ENCODE measurements at regions of chr9 and their contacts with region 1.

Region 1: DNA sequence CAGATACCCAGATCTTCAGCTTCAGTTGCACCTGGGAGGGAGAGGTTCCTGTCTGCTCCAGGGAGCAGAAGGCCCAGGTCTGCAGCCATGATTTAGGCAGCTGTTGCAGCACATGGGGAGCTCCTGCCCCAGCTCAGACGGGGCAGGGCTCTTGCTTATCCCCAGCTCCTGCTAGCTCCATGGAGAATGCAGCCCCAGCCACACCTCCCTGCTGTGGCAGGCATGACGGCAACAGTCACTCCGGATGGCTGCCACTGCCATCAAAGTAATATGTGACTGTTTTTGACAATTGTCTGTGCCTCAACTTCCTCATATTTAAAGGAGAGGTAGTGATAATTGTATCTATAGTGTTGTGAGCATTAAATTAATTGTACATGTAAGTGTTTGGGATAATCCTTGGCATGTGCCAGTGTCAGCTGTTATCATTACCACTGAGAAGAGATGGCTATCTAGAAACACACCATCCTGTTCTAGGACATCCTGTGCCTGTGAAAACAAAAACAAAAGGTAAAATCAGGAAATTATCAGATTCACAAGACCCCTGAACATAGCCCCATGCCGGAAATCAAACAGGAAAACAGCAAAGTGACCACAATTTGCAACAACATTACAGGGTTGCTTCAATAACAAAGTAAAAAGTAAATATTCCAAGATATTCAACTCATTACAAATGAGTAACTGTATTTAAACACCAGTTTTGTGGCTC is 1048.8 kb upstream of the ACO1 start:
- DNase-seq: peak in 1 of 9 donors; percentile 17
- ATAC-seq: no peak
- H3K4me3 ChIP-seq: peak overlapping the region; percentile 12
- H3K4me3 Mint-ChIP-seq: peak overlapping the region; percentile 3 to 71 (median 55)
- H3K27ac ChIP-seq: no peak overlapping the region
- H3K27ac Mint-ChIP-seq: peak overlapping the region in 6 of 9 donors; percentile 34 to 92 (median 59)
- H3K4me1 ChIP-seq: peaks cover 23 to 26% of the 10 kb centered on the region in 2 donors
- H3K4me1 Mint-ChIP-seq: peaks cover 6 to 28% (median 20%) of the 10 kb centered on the region in 7 donors
- H3K27me3 ChIP-seq: no peaks in the 10 kb centered on the region
- H3K27me3 Mint-ChIP-seq: peaks cover 0 to 3% (median 0%) of the 10 kb centered on the region in 5 donors

Region 2: GRCh38 chr9:31253800-31254762 is 81.6 kb before region 1 on chr9:
- CTCF ChIA-PET with region 1: no interaction called
- POLR2A ChIA-PET with region 1: no interaction called
- intact Hi-C with region 1: no loop called
- DNase-seq: no peak
- ATAC-seq: no peak
- H3K4me3 ChIP-seq: no peak overlapping the region
- H3K4me3 Mint-ChIP-seq: no peak overlapping the region
- H3K27ac ChIP-seq: no peak overlapping the region
- H3K27ac Mint-ChIP-seq: peak overlapping the region in 6 of 9 donors; percentile 22 to 67 (median 38)
- H3K4me1 ChIP-seq: no peaks in the 10 kb centered on the region
- H3K4me1 Mint-ChIP-seq: peaks cover 0 to 11% (median 7%) of the 10 kb centered on the region in 7 donors
- H3K27me3 ChIP-seq: no peaks in the 10 kb centered on the region
- H3K27me3 Mint-ChIP-seq: no peaks in the 10 kb centered on the region

Region 3: DNA sequence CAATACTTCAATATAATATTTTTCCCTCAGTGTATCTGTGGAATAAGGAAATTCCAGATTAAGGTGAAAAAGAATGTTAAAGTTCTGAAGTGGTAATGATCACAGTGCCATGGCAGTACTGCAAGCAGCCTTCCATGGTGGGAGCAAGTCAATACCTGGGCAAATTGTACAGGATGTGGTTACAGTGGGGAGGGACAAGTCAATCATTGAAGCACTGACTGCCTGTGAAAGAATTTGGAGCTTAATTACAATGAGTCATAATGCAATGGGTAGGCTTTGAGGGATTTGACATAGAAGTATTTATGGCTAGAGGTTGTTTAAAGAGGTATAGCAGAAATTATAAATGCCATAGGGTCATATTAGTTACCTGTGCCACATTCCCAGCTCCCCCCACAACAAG is 262.3 kb after region 1 on chr9:
- CTCF ChIA-PET with region 1: no interaction called
- POLR2A ChIA-PET with region 1: no interaction called
- intact Hi-C with region 1: loop called in 1 of 2 experiments (anchors 5 kb)
- DNase-seq: peak in 7 of 9 donors; percentile 12 to 46 (median 29)
- ATAC-seq: peak; percentile 63
- H3K4me3 ChIP-seq: no peak overlapping the region
- H3K4me3 Mint-ChIP-seq: peak overlapping the region in 1 of 10 donors; percentile 3
- H3K27ac ChIP-seq: no peak overlapping the region
- H3K27ac Mint-ChIP-seq: peak overlapping the region in 2 of 9 donors; percentile 15 to 17
- H3K4me1 ChIP-seq: peaks cover 0 to 6% of the 10 kb centered on the region in 2 donors
- H3K4me1 Mint-ChIP-seq: peaks cover 0 to 17% (median 11%) of the 10 kb centered on the region in 7 donors
- H3K27me3 ChIP-seq: no peaks in the 10 kb centered on the region
- H3K27me3 Mint-ChIP-seq: no peaks in the 10 kb centered on the region